ENCODE measurements at regions of chr9 and their contacts with region 1.

Region 1: GRCh38 chr9:72734631-72735030 is 213.2 kb downstream of the TMC1 start:
- DNase-seq: no peak
- ATAC-seq: peak in 2 of 4 donors; percentile 28 to 37
- H3K4me3 ChIP-seq: no peak overlapping the region
- H3K27ac ChIP-seq: no peak overlapping the region
- H3K4me1 ChIP-seq: no peaks in the 10 kb centered on the region
- H3K27me3 ChIP-seq: no peaks in the 10 kb centered on the region
- CTCF ChIP-seq: no peak

Region 2: DNA sequence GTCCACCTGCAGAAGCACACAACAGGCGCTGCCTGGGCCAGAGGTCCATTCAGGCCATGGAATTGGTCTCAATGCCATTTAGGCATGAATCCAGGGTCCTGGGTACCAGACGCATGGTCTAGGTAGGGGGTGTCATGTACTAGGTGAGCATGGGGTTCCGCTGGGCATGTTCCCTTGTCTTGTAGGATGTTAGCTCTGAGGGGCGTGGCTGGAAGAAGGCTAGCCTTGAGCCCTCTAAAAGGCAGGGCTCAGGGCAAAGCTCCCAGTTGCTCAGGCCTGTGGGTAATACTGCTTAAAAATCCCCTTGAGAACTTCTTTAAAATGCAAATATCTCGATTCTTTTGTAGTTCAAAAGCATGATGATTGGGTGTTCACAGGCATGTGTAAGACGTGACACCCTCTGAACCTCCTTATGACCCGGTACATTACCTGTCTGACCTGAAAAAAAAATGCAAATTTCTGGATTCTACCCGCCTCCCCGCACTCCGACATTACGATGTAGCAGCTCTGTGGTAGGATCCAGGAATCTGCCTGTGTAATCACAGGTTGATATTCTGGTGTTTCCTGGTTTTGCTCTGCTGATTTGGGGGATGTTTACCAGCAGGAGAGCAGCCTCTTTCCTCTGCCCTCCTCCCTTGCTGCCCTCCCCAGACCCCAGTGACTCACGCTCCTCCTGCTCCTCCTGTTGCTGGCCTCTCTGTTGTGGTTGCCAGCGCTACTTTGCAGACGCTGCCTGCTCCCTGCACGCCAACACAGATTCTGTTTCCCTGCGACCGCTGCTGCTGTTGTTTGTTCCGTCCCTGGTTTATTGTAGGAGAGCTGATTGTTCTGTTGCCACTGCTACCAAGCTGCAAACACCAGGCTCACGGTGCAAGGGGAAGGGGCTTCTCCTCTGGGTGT is 207.5 kb before region 1 on chr9:
- intact Hi-C with region 1: no loop called
- DNase-seq: peak in 5 of 6 donors; percentile 42 to 63 (median 50)
- ATAC-seq: peak; percentile 46 to 90 (median 78)
- H3K4me3 ChIP-seq: no peak overlapping the region
- H3K27ac ChIP-seq: peak overlapping the region in 2 of 4 donors; percentile 64 to 73
- H3K4me1 ChIP-seq: peaks cover 0 to 13% (median 6%) of the 10 kb centered on the region in 3 donors
- H3K27me3 ChIP-seq: no peaks in the 10 kb centered on the region
- CTCF ChIP-seq: no peak

Region 3: DNA sequence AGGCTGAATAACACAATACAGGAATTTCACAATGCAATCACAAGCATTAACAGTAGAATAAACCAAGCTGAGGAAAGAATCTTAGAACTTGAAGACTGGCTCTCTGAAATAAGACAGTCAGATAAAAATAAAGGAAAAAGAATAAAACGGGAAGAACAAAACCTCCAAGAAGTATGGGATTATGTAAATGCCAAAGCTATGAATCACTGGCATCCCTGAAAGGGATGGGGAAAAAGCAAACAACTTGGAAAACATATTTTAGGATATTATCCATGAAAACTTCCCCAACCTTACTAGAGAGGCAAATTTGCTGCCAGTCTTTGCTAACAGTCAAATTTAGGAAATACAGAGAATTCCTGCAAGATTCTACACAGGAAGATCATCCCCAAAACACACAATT is 60.3 kb after region 1 on chr9:
- intact Hi-C with region 1: loop called in 1 of 3 experiments (anchors 10 kb)
- DNase-seq: no peak
- ATAC-seq: no peak
- H3K4me3 ChIP-seq: no peak overlapping the region
- H3K27ac ChIP-seq: no peak overlapping the region
- H3K4me1 ChIP-seq: no peaks in the 10 kb centered on the region
- H3K27me3 ChIP-seq: no peaks in the 10 kb centered on the region
- CTCF ChIP-seq: no peak

Region 4: GRCh38 chr9:73194284-73194683 is 459.7 kb after region 1 on chr9:
- intact Hi-C with region 1: no loop called
- DNase-seq: no peak
- ATAC-seq: no peak
- H3K4me3 ChIP-seq: no peak overlapping the region
- H3K27ac ChIP-seq: no peak overlapping the region
- H3K4me1 ChIP-seq: no peaks in the 10 kb centered on the region
- H3K27me3 ChIP-seq: peaks cover 0 to 3% (median 0%) of the 10 kb centered on the region in 4 donors
- CTCF ChIP-seq: no peak